ENCODE measurements at regions of chr1 and their contacts with region 1.

Region 1: DNA sequence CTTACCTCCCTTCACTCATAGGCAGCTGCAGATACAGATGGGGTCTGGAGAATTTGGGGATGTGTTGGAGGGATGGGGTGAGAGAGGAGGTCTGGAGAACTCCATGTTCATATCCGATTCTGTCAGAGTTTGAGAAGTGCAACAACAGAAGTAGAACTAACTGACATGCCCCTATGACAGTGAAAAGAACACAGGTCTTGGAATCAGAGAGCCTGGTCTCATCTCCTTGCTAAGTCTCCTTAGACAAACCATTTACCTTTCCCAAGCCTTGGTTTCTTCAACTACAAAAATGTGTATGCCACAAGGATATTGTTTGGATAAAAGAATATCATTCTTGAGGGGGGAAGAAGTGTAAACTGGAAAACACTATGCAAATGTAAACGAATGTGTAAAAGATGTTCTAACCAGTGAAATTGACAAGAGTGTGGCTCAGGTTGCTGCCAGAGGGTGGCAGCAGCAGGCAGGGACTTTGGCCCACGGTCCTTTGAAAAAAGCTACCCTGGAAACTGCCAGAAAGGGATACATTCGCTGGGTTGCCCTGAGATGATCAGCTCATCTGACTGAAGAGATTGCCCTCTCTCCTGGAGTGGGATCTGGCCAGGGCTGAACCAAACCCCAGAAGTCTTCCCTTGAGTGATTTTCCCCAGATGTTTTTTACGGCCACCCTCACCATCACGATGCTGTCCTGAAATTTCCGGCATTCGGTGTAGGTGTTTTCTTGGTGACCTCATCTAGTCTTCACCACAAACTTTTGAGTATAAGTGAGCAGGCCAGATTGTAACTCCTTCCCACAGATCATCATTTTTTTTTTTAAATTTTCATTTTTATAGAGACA is 17.0 kb upstream of the CD2 start:
- DNase-seq: peak; percentile 84
- H3K4me3 Mint-ChIP-seq: peak overlapping the region; percentile 55
- H3K27ac Mint-ChIP-seq: peak overlapping the region; percentile 93
- H3K4me1 Mint-ChIP-seq: peaks cover 58% of the 10 kb centered on the region
- H3K27me3 Mint-ChIP-seq: no peaks in the 10 kb centered on the region

Region 2: DNA sequence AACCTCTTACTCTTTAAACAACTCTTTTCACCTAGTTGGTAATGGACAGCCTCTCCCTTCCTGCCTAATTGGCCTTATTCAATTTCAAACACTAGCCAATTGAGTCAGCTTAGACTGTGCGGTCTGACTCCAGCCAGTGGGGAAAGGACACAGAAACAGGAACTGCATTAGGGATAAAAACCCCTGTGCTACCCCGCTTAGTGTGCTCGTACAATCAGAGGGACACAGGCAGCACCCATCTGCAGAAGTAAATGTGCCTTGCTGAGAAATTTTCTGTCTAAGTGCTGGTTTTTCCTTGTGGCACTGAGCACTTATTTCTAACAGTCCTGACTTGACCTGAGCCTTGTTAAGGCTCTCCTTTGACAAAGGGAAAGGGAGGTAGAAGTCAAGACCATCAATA is 11.0 kb after region 1 on chr1:
- CTCF ChIA-PET with region 1: interaction called, 36 read pairs
- POLR2A ChIA-PET with region 1: interaction called, 4 read pairs
- DNase-seq: no peak
- H3K4me3 Mint-ChIP-seq: no peak overlapping the region
- H3K27ac Mint-ChIP-seq: no peak overlapping the region
- H3K4me1 Mint-ChIP-seq: peaks cover 23% of the 10 kb centered on the region
- H3K27me3 Mint-ChIP-seq: no peaks in the 10 kb centered on the region

Region 3: DNA sequence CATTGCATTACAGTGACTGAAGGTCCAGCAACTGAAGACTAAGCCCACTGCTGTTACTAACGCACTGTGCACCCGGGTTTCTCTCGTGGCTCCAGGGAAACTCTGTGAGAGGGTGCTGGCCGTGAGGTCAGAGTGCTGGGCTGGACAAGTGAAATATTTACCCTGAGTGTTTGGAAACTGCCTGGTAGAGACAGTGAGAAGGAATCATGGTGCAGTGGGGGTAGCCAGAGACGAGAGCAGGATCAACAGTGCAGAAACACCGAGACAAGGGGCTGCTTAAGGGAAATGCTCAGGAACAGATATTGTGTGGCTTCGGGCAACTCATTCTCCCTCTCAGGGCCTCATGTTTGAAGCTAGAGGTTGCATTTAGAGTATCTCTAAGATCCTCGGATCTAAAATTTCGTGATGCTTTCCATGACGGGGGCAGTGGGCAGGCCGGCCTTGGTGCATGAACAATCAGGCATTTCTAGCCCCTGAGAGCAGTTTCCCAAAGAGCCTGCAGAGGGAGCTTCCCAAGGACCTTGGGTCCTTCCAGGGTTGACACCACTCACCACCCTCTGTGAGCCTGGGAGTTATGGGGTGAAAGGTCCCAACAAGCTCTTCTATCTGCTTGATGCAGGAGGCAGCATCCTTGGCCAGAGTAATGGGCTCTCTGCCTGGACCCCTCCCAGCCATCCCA is 26.7 kb after region 1 on chr1:
- CTCF ChIA-PET with region 1: interaction called, 58 read pairs
- POLR2A ChIA-PET with region 1: interaction called, 46 read pairs
- DNase-seq: peak; percentile 52
- H3K4me3 Mint-ChIP-seq: peak overlapping the region; percentile 65
- H3K27ac Mint-ChIP-seq: peak overlapping the region; percentile 96
- H3K4me1 Mint-ChIP-seq: peaks cover 96% of the 10 kb centered on the region
- H3K27me3 Mint-ChIP-seq: no peaks in the 10 kb centered on the region

Region 4: GRCh38 chr1:116781034-116781433 is 43.8 kb after region 1 on chr1:
- CTCF ChIA-PET with region 1: no interaction called
- POLR2A ChIA-PET with region 1: no interaction called
- DNase-seq: no peak
- H3K4me3 Mint-ChIP-seq: no peak overlapping the region
- H3K27ac Mint-ChIP-seq: no peak overlapping the region
- H3K4me1 Mint-ChIP-seq: peaks cover 34% of the 10 kb centered on the region
- H3K27me3 Mint-ChIP-seq: no peaks in the 10 kb centered on the region

Region 5: DNA sequence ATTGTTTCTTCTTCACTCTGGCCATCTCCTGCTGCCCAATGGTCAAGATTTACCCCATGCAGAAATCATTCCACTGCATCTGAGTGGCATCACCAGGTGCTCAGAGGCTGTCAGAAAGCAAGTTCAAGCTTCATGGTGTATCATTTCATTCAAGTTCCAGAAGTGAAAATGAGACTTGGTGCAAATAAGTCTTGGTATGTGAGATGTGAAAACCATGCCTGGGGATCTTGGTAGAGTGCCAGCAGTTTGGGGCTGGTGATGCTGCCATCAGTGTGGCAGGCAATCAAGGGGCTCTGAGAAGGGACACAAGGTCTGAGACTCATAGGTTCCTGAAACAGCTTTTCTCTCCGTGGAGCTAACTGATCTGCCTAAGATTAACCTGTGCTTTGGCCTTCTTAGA is 69.0 kb after region 1 on chr1:
- CTCF ChIA-PET with region 1: interaction called, 10 read pairs
- POLR2A ChIA-PET with region 1: interaction called, 3 read pairs
- DNase-seq: peak; percentile 52
- H3K4me3 Mint-ChIP-seq: peak overlapping the region; percentile 42
- H3K27ac Mint-ChIP-seq: peak overlapping the region; percentile 90
- H3K4me1 Mint-ChIP-seq: peaks cover 92% of the 10 kb centered on the region
- H3K27me3 Mint-ChIP-seq: no peaks in the 10 kb centered on the region

Region 6: GRCh38 chr1:116826818-116827606 is 89.8 kb after region 1 on chr1:
- CTCF ChIA-PET with region 1: interaction called, 22 read pairs
- POLR2A ChIA-PET with region 1: interaction called, 3 read pairs
- DNase-seq: peak; percentile 72
- H3K4me3 Mint-ChIP-seq: peak overlapping the region; percentile 31
- H3K27ac Mint-ChIP-seq: peak overlapping the region; percentile 91
- H3K4me1 Mint-ChIP-seq: peaks cover 50% of the 10 kb centered on the region
- H3K27me3 Mint-ChIP-seq: no peaks in the 10 kb centered on the region

Region 7: GRCh38 chr1:117059678-117060440 is 322.6 kb after region 1 on chr1 and contains the start of gene TTF2:
- CTCF ChIA-PET with region 1: interaction called, 11 read pairs
- POLR2A ChIA-PET with region 1: interaction called, 3 read pairs
- DNase-seq: peak; percentile 99
- H3K4me3 Mint-ChIP-seq: no peak within 1 kb of the TSS
- H3K27ac Mint-ChIP-seq: no peak within 1 kb of the TSS
- H3K4me1 Mint-ChIP-seq: peaks cover 61% of the 10 kb centered on the region
- H3K27me3 Mint-ChIP-seq: no peaks in the 10 kb centered on the region
- total RNA-seq, gene TTF2: 123 to 133 TPM